ENCODE measurements at regions of chr15 and their contacts with region 1.

Region 1: GRCh38 chr15:37095179-37095711 is 5.1 kb downstream of the MEIS2 start:
- DNase-seq: no peak
- H3K4me3 ChIP-seq: no peak overlapping the region
- H3K27ac ChIP-seq: no peak overlapping the region
- H3K4me1 ChIP-seq: peaks cover 6% of the 10 kb centered on the region
- H3K27me3 ChIP-seq: no peaks in the 10 kb centered on the region
- CTCF ChIP-seq: no peak

Region 2: DNA sequence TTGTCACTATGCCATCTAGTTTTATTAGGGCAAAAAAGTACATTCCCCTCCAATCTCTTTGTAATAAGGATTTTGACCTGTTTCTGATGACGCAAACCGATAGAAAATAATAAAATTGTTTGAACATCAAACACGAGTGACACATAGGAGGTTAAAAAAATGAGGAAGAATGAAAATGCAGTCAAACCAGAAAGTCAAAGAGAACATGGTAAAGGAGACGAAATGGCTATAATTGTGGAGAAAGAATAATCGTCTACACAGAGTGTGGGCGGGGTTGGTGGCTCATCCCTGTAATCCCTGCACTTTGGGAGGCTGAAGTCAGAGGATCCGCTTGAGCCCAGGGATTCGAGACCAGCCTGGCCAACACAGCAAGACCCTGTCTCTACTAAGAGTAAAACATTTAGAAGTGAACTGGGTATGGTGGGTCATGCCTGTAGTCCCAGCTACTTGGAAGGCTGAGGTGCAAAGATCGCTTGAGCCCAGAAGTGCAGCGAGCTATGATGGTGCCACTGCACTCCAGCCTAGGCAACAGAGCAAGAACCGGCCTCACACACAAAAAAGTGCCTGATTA is 78.1 kb before region 1 on chr15:
- CTCF ChIA-PET with region 1: interaction called, 20 read pairs
- dilution Hi-C with region 1: no loop called
- in situ Hi-C with region 1: no loop called
- intact Hi-C with region 1: no loop called
- DNase-seq: no peak
- H3K4me3 ChIP-seq: no peak overlapping the region
- H3K27ac ChIP-seq: no peak overlapping the region
- H3K4me1 ChIP-seq: no peaks in the 10 kb centered on the region
- H3K27me3 ChIP-seq: no peaks in the 10 kb centered on the region
- CTCF ChIP-seq: no peak

Region 3: DNA sequence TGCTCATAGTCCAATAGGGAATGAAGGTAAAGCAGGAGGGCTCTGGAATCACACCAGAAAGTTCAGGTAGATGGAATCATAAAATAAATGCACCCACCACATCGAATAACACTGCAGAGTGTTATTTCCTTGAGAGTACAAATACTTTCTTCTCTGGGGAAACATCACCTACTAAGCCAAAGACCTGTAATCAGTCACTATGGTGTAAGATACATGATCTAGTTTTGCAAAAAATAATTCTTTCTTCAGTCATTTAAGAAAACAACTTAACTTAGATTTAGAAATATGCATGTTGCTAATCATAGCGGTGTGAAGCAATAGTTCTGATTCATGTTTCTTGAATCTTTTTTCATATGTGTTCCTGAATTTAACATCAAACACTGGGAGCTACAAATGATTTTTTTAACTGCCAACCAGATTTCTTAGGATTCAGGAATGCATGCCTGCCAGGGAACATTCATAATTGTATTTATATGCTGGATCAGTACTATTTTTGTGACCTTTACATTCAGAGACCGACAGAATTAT is 45.4 kb after region 1 on chr15:
- CTCF ChIA-PET with region 1: no interaction called
- dilution Hi-C with region 1: no loop called
- in situ Hi-C with region 1: no loop called
- intact Hi-C with region 1: no loop called
- DNase-seq: no peak
- H3K4me3 ChIP-seq: no peak overlapping the region
- H3K27ac ChIP-seq: no peak overlapping the region
- H3K4me1 ChIP-seq: no peaks in the 10 kb centered on the region
- H3K27me3 ChIP-seq: no peaks in the 10 kb centered on the region
- CTCF ChIP-seq: no peak

Region 4: DNA sequence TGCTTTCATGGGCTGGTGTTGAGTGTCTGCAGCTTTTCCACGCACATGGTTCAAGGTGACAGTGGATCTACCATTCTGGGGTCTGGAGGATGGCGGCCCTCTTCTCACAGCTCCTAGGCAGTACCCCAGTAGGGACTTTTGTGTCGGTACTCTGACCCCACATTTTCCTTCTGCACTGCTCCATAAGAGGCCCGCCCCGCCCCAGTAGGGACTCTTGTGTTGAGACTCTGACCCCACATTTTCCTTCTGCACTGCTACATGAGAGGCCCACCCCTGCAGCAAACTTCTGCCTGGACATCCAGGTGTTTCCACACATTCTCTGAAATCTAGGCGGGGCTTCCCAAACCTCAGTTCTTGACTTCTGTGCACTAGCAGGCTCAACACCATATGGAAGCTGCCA is 388.5 kb after region 1 on chr15:
- CTCF ChIA-PET with region 1: no interaction called
- dilution Hi-C with region 1: no loop called
- in situ Hi-C with region 1: no loop called
- intact Hi-C with region 1: no loop called
- DNase-seq: no peak
- H3K4me3 ChIP-seq: no peak overlapping the region
- H3K27ac ChIP-seq: no peak overlapping the region
- H3K4me1 ChIP-seq: no peaks in the 10 kb centered on the region
- H3K27me3 ChIP-seq: no peaks in the 10 kb centered on the region
- CTCF ChIP-seq: no peak

Measured in mammary epithelial cell (primary cell).